SK-N-SH (cell line): ENCODE measurements at regions of chr6 and their contacts with region 1.

Region 1: GRCh38 chr6:105164418-105164817 is 15.4 kb downstream of the POPDC3 start:
- DNase-seq: peak; percentile 25
- H3K4me3 ChIP-seq: no peak overlapping the region
- H3K27ac ChIP-seq: peak overlapping the region; percentile 3 to 50; a peak in 3 of 4 replicates
- H3K4me1 ChIP-seq: peaks cover 8 to 12% of the 10 kb centered on the region in 2 experiments; a peak in 2 of 4 replicates
- H3K27me3 ChIP-seq: no peaks in the 10 kb centered on the region
- CTCF ChIP-seq: no peak
- EP300 ChIP-seq: no peak
- RAD21 ChIP-seq: no peak

Region 2: DNA sequence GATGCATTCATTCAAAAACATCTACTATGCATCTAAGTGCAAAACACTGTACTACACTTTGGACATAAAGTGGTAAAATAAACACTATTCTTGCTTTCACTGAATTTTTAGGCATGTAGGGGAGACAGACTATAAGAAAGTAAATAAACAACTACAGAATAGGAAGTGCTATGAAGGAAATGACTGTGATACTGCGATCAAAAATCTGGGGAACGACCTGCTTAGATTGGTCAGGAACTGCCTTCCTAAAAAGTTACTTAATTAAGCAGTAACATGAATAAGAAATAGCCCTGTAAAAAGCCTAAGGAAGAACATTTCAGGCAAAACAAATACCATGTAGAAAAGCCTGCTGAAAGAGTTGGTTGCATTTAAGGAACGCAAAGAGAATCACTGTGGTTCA is 355.3 kb before region 1 on chr6:
- CTCF ChIA-PET with region 1: no interaction called
- POLR2A ChIA-PET with region 1: no interaction called
- DNase-seq: no peak
- H3K4me3 ChIP-seq: no peak overlapping the region
- H3K27ac ChIP-seq: no peak overlapping the region
- H3K4me1 ChIP-seq: no peaks in the 10 kb centered on the region
- H3K27me3 ChIP-seq: no peaks in the 10 kb centered on the region
- CTCF ChIP-seq: no peak
- EP300 ChIP-seq: no peak
- RAD21 ChIP-seq: no peak

Region 3: GRCh38 chr6:105136431-105137350 is 27.7 kb before region 1 on chr6:
- CTCF ChIA-PET with region 1: interaction called, 10 read pairs
- POLR2A ChIA-PET with region 1: no interaction called
- DNase-seq: peak; percentile 97
- H3K4me3 ChIP-seq: peak overlapping the region; percentile 85 to 90
- H3K27ac ChIP-seq: peak overlapping the region; percentile 50 to 82
- H3K4me1 ChIP-seq: peaks cover 0 to 8% of the 10 kb centered on the region in 2 experiments; a peak in 2 of 4 replicates
- H3K27me3 ChIP-seq: no peaks in the 10 kb centered on the region
- CTCF ChIP-seq: peak; percentile 35
- EP300 ChIP-seq: peak in 1 of 2 experiments; percentile 19; a peak in 1 of 4 replicates
- RAD21 ChIP-seq: no peak

Region 4: DNA sequence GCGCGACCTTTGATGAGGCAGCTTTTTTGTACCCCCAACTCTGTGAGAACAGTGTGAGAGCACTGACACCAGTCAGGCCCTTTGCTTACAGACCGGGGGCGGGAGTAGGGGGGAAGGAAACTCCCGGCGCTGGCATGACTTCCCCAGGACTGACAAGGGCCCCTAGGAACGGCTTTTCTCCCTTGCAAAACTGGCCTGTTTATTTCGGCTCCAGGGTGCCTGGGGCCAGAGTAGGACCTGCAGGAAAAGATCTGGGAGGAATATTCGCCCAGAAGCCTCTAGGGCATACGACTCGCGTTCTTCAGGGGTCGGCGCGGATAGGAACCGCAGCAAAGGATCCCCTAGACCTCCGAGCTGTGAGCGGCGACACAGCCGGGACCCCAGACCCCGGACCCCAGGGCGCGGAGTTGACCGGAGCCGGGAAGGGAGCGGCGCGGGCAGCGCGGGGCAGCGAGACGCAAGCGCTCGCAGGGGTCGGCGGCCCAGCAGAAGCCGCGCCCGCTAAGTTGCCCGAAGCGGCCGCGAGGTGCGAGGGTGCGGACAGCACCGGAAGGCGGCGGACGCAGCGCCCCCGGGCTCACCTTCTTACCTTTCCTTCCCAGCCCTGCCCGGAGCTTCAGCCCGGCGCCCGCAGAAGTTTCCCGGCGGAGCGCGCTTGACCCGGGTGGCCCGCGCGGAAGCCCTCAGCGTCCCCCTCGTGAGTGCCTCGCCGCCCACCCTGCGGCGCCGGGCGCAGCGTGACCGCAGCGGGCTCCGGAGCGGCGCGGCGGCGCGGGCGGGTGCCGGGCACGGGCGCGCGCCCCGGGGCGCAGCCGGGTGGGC is 15.0 kb after region 1 on chr6 and contains the start of gene POPDC3:
- CTCF ChIA-PET with region 1: interaction called, 10 read pairs
- POLR2A ChIA-PET with region 1: no interaction called
- DNase-seq: peak; percentile 86
- H3K4me3 ChIP-seq: peak within 1 kb of the TSS; percentile 70 to 74
- H3K27ac ChIP-seq: peak within 1 kb of the TSS; percentile 83 to 91
- H3K4me1 ChIP-seq: no peaks in the 10 kb centered on the region; a peak in 2 of 4 replicates
- H3K27me3 ChIP-seq: no peaks in the 10 kb centered on the region
- CTCF ChIP-seq: 0 out of 2 replicates have a peak, but pooled peaks have one; percentile 7
- EP300 ChIP-seq: no peak
- RAD21 ChIP-seq: no peak
- polyA plus RNA-seq, gene POPDC3: 19.0 and 21.3 TPM in 2 replicates

Region 5: DNA sequence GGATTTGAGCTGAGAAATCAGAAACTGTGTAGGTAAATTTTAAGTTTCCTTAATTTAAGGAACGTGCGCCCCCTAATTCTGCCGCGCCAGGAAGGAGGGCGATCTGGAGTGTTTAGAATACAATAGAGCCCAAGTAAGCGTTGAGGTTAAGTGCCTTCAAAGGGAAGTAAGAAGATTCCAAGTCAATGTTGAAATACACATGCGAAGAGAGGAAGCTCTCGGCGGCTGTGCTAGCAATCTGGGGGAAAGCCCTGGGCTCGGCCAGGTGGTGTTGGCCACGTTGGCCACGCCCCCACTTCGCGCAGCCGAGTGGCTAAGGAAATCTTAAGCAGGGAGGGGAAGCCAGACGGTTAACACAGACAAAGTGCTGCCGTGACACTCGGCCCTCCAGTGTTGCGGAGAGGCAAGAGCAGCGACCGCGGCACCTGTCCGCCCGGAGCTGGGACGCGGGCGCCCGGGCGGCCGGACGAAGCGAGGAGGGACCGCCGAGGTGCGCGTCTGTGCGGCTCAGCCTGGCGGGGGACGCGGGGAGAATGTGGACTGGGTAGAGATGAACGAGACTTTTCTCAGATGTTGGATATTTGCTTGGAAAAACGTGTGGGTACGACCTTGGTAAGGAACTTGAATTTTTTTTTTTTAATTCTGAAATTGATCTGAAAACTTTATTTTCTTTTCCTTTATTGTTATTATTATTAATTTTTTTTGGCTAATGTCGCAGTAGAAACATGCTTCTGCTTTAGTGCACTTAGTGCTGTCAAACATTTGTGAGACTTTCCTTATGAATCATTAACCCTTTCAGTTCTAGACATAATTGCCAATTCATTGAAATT is 921.8 kb after region 1 on chr6 and contains the start of gene PRDM1:
- CTCF ChIA-PET with region 1: no interaction called
- POLR2A ChIA-PET with region 1: no interaction called
- DNase-seq: peak; percentile 69
- H3K4me3 ChIP-seq: peak within 1 kb of the TSS; percentile 72 to 74
- H3K27ac ChIP-seq: peak within 1 kb of the TSS; percentile 19 to 71
- H3K4me1 ChIP-seq: peaks cover 5 to 35% of the 10 kb centered on the region in 2 experiments
- H3K27me3 ChIP-seq: no peaks in the 10 kb centered on the region
- CTCF ChIP-seq: peak; percentile 35
- EP300 ChIP-seq: no peak
- RAD21 ChIP-seq: peak; percentile 15; the same call in 1 of the 2 replicates
- polyA plus RNA-seq, gene PRDM1: 2.3 and 4.0 TPM in 2 replicates